ENCODE measurements at regions of chr1 and their contacts with region 1.

Region 1: GRCh38 chr1:35202048-35202719 is 9.2 kb upstream of the SFPQ start:
- DNase-seq: peak in 1 of 2 donors; percentile 72
- ATAC-seq: peak; percentile 90
- H3K4me3 ChIP-seq: no peak overlapping the region
- H3K27ac ChIP-seq: no peak overlapping the region
- H3K4me1 ChIP-seq: no peaks in the 10 kb centered on the region
- H3K27me3 ChIP-seq: no peaks in the 10 kb centered on the region

Region 2: GRCh38 chr1:35298464-35298863 is 96.3 kb after region 1 on chr1:
- intact Hi-C with region 1: loop called (anchors 5 to 10 kb)
- DNase-seq: no peak
- ATAC-seq: peak; percentile 55
- H3K4me3 ChIP-seq: no peak overlapping the region
- H3K27ac ChIP-seq: no peak overlapping the region
- H3K4me1 ChIP-seq: peaks cover 0 to 6% of the 10 kb centered on the region in 2 donors
- H3K27me3 ChIP-seq: no peaks in the 10 kb centered on the region

Measured in aorta (tissue), 5 donors.